Transverse colon (tissue), 4 donors: ENCODE measurements at regions of chr15 and their contacts with region 1.

Region 1: GRCh38 chr15:90519688-90520087 is 10.0 kb upstream of the CRTC3 start:
- DNase-seq: no peak
- H3K4me3 ChIP-seq: no peak overlapping the region
- H3K27ac ChIP-seq: no peak overlapping the region
- H3K4me1 ChIP-seq: no peaks in the 10 kb centered on the region
- H3K27me3 ChIP-seq: no peaks in the 10 kb centered on the region
- CTCF ChIP-seq: no peak
- EP300 ChIP-seq: no peak
- POLR2A ChIP-seq: no peak

Region 2: GRCh38 chr15:90603893-90604292 is 84.2 kb after region 1 on chr15:
- in situ Hi-C with region 1: loop called in 1 of 4 experiments (anchors 25 kb)
- intact Hi-C with region 1: no loop called
- DNase-seq: peak; percentile 53
- H3K4me3 ChIP-seq: no peak overlapping the region
- H3K27ac ChIP-seq: no peak overlapping the region
- H3K4me1 ChIP-seq: peaks cover 0 to 11% (median 2%) of the 10 kb centered on the region in 4 donors
- H3K27me3 ChIP-seq: no peaks in the 10 kb centered on the region
- CTCF ChIP-seq: peak; percentile 30 to 38 (median 34)
- EP300 ChIP-seq: no peak
- POLR2A ChIP-seq: no peak